ENCODE measurements at regions of chr14 and their contacts with region 1.

Region 1: DNA sequence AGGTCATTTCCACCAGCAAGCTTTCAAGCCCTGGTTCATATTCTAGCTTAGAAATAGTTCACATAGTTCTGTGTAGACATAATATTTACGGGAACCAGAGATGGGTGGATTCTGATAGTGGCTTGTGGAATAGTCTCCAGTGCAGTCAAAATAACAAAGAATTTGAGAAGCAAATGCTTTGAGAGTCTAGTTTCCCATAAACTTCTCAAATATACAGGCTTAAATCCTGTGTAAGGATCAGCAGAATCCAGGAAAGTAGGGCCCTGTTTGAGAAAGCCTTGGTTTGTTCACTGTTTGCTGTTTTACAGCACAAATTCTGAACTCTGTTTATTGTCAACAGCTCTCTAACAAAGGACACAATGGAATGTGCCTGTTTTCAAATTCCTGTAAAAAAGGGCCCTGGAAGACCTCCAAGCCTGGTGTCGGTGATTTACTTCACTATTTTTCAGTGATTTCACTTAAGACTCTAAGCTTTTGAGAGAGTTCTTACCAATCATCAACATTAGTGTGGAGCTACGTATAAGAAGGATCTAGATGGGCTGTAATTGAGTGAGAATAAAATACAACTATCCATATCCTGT is 11.4 kb upstream of the FOS start:
- DNase-seq: no peak
- H3K4me3 ChIP-seq: no peak overlapping the region
- H3K27ac ChIP-seq: no peak overlapping the region
- H3K4me1 ChIP-seq: peaks cover 21% of the 10 kb centered on the region
- H3K27me3 ChIP-seq: no peaks in the 10 kb centered on the region
- CTCF ChIP-seq: no peak

Region 2: DNA sequence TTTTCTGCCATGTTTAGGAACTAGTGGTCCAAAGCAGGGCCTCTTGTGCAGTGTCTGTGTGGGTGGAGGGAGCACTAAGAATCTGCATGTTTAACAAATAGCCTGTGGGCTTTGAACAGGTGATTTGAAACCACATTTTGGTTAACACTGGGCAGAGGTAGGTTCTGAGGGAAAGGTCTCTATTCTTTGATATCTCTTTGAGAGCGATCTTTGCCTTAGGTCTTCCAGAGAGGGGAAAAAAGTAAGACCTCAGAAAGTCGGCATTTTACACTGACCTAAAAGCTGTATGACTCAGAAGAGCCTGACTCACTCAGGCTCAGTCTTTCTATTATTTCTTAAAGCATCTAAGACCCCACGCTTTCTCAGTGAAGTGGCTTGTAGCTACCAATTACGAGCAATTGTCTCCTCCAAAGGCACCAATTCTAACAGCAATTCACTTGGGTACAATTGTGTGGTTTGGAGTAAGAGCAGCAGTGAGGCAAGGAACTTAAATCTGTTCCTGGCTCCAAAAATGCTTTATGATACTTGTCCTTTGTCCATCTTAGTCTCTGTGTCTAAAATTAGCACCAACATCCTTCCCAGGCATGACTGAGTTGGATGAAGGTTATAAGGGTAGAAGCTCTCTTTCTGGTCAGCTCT is 255.8 kb before region 1 on chr14:
- CTCF ChIA-PET with region 1: no interaction called
- POLR2A ChIA-PET with region 1: interaction called, 14 read pairs
- intact Hi-C with region 1: no loop called
- DNase-seq: no peak
- H3K4me3 ChIP-seq: no peak overlapping the region
- H3K27ac ChIP-seq: peak overlapping the region; percentile 1; the same call in 1 of the 2 replicates
- H3K4me1 ChIP-seq: no peaks in the 10 kb centered on the region
- H3K27me3 ChIP-seq: no peaks in the 10 kb centered on the region
- CTCF ChIP-seq: no peak

Region 3: GRCh38 chr14:75176142-75176820 is 91.0 kb before region 1 on chr14 and contains the start of gene TMED10:
- CTCF ChIA-PET with region 1: interaction called, 3 read pairs
- POLR2A ChIA-PET with region 1: interaction called, 11 read pairs
- intact Hi-C with region 1: no loop called
- DNase-seq: peak; percentile 84 to 96
- H3K4me3 ChIP-seq: peak within 1 kb of the TSS; percentile 80
- H3K27ac ChIP-seq: peak within 1 kb of the TSS; percentile 94
- H3K4me1 ChIP-seq: peaks cover 26% of the 10 kb centered on the region
- H3K27me3 ChIP-seq: no peaks in the 10 kb centered on the region
- CTCF ChIP-seq: no peak
- total RNA-seq, gene TMED10: 709 and 770 TPM in 2 replicates

Region 4: DNA sequence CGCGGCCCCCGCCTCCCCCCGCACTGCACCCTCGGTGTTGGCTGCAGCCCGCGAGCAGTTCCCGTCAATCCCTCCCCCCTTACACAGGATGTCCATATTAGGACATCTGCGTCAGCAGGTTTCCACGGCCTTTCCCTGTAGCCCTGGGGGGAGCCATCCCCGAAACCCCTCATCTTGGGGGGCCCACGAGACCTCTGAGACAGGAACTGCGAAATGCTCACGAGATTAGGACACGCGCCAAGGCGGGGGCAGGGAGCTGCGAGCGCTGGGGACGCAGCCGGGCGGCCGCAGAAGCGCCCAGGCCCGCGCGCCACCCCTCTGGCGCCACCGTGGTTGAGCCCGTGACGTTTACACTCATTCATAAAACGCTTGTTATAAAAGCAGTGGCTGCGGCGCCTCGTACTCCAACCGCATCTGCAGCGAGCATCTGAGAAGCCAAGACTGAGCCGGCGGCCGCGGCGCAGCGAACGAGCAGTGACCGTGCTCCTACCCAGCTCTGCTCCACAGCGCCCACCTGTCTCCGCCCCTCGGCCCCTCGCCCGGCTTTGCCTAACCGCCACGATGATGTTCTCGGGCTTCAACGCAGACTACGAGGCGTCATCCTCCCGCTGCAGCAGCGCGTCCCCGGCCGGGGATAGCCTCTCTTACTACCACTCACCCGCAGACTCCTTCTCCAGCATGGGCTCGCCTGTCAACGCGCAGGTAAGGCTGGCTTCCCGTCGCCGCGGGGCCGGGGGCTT is 11.4 kb after region 1 on chr14 and contains the start of gene FOS:
- CTCF ChIA-PET with region 1: no interaction called
- POLR2A ChIA-PET with region 1: interaction called, 42 read pairs
- intact Hi-C with region 1: no loop called
- DNase-seq: peak; percentile 92 to 98
- H3K4me3 ChIP-seq: peak within 1 kb of the TSS; percentile 90
- H3K27ac ChIP-seq: peak within 1 kb of the TSS; percentile 95
- H3K4me1 ChIP-seq: peaks cover 51% of the 10 kb centered on the region
- H3K27me3 ChIP-seq: no peaks in the 10 kb centered on the region
- CTCF ChIP-seq: no peak
- total RNA-seq, gene FOS: 84.6 and 154 TPM in 2 replicates

Region 5: DNA sequence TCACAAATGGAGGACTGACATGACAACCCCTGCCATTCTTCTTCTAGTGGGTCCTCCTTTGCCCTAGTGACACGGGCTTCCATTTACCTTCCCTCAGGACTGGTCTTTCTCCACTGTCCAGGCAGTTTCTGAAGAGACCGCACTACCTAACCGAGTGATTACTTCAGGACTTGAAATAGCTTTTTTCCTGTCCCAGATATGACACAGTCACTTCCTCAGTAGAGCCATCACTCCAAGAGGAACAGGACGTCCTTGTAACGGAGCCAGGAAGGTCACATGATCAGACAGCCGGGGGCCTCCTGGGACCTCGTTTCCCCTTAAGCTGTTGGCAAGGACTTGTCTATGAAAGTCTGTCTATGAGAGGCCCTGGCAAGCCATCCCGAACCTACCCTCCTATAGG is 73.7 kb after region 1 on chr14:
- CTCF ChIA-PET with region 1: no interaction called
- POLR2A ChIA-PET with region 1: no interaction called
- intact Hi-C with region 1: no loop called
- DNase-seq: no peak
- H3K4me3 ChIP-seq: no peak overlapping the region
- H3K27ac ChIP-seq: no peak overlapping the region
- H3K4me1 ChIP-seq: no peaks in the 10 kb centered on the region
- H3K27me3 ChIP-seq: no peaks in the 10 kb centered on the region
- CTCF ChIP-seq: no peak

Region 6: DNA sequence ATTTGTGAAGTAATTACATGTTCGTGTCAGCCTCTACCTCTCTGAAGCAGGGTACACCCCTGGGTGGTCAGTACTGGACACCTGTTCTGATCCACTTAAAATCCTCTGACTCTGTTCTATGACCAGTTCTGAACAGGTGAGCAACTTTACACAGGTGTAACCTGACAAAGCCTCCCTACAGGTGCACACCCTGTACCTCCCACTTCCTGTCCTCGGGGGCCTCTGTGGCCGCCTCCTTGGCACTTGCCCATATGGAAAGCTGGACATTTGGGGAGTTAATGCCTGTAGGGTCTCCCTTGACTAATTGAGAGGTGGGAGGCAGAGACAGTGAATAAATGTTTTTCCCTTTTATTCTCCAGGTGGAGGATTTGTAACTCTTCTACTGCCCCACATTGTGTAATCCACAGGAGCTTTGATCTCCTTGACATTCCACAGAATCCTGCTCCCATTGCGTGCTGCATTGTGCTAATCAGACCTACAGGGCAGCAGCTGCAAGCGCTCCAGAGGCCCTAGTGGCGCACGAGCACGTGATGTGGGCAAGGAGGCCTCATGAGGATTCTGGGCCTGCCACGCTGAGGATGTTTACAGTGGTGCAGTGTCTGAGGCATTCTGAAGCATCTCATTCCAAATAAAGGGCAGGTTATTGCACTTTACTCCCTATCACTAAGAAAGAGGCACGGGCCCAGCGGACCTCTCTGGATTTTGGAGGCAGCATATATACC is 209.2 kb after region 1 on chr14:
- CTCF ChIA-PET with region 1: interaction called, 11 read pairs
- POLR2A ChIA-PET with region 1: no interaction called
- intact Hi-C with region 1: no loop called
- DNase-seq: no peak
- H3K4me3 ChIP-seq: no peak overlapping the region
- H3K27ac ChIP-seq: no peak overlapping the region
- H3K4me1 ChIP-seq: no peaks in the 10 kb centered on the region; the same call in 1 of the 2 replicates
- H3K27me3 ChIP-seq: no peaks in the 10 kb centered on the region
- CTCF ChIP-seq: no peak

Region 7: DNA sequence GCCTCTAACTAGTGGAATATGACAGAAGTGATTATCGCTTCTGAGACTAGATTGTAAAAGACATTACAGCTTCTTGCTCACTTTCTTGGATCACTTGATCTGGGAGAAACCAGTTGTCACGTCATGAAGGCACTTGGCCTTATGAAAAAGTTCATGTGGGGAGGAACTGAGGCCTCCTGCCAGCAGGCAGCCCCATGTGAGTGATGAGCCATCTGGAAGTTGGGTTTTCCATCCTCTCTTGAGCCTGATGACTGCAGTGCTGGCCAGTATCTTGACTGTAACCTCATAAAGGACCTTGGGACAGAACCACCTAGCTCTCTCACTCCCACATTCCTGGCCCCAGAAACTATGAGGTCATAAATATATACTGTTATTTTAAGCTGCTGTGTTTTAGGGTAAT is 421.8 kb after region 1 on chr14:
- CTCF ChIA-PET with region 1: no interaction called
- POLR2A ChIA-PET with region 1: no interaction called
- intact Hi-C with region 1: no loop called
- DNase-seq: no peak
- H3K4me3 ChIP-seq: no peak overlapping the region
- H3K27ac ChIP-seq: no peak overlapping the region
- H3K4me1 ChIP-seq: no peaks in the 10 kb centered on the region
- H3K27me3 ChIP-seq: no peaks in the 10 kb centered on the region
- CTCF ChIP-seq: no peak